Posterior vena cava (tissue), 2 donors: ENCODE measurements at regions of chr1 and their contacts with region 1.

Region 1: DNA sequence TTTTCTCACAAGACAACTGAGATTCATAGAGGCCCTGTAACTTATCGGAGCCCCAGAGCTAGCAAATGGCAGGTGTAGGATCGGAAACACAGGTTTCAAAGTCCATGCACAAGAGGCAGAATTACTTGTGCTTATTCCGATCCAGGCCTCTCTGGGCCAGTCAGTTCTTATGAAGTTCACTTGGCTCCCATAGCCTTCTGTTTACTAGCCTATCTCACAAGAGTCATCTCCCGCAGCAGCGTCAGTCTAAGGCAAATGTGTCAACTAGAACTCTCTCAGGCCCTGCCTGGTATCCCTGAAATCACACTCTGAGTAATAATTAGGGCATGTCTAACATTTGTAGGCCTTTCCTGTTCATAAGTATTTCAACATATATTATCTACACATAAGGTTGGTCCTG is 43.3 kb downstream of the PHC2 start:
- DNase-seq: no peak

Region 2: DNA sequence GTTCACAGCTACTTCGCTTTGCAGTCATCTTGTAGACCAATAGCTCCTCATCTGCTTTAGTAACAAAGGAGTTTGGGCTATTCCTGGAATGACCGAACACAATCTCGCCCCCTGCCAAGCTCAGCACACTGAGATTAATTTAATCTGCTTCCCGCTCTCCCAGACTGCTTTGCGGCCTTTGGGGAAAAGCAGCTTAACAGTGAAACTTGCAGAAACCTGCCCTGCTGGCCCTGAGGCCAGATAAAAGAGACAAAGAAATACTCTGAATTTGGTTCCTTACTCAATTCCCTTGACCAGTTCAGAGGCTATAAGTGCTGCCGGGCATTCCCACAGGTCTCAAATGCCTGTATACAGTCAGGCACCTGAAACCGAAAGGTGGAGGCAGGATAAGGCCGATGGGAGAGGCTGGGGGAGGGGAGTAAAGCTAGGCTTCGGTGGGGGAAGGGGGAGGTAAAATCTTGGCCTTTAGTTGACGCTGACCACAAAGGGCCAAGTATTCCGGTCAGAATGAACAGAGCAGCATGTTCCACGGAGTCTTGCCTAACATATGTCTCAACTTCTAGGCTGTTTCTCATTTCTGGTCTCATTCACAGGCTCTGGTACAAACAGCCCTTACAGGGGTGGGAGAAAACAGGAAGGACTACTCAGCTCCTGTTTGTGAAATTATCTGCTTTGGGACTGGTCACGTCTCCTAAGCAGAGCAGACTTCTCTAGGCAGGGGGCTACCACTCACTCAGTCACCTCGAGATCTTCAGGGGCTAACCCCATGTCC is 49.0 kb before region 1 on chr1:
- intact Hi-C with region 1: no loop called
- DNase-seq: no peak

Region 3: GRCh38 chr1:33443705-33444180 is 56.1 kb after region 1 on chr1:
- intact Hi-C with region 1: loop called in 1 of 2 experiments (anchors 2 kb)
- DNase-seq: no peak